ENCODE measurements at regions of chr10 and their contacts with region 1.

Region 1: GRCh38 chr10:4372601-4373000 is 453.4 kb upstream of the AKR1E2 start:
- DNase-seq: no peak
- H3K4me3 ChIP-seq: no peak overlapping the region
- H3K27ac ChIP-seq: no peak overlapping the region
- H3K4me1 ChIP-seq: no peaks in the 10 kb centered on the region
- H3K27me3 ChIP-seq: no peaks in the 10 kb centered on the region
- CTCF ChIP-seq: no peak

Region 2: DNA sequence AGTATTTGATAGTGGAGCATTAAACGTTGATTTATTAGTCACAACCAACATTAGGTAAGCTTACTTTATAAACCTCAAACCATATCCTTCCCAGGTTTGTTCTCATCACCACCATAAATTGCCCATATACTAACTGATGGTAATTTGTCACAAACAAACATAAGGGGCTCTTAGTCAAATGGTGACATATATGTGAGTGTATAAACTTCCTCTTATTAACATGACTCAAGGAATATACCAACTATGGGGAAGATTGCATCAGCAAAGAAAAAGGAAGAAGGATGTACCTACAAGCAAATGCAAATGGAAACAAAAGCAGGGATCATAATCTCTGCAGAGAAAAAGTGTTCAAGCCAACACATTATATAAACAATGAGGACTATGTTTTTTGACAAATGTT is 35.2 kb after region 1 on chr10:
- CTCF ChIA-PET with region 1: no interaction called
- dilution Hi-C with region 1: loop called (anchors 5 kb)
- in situ Hi-C with region 1: no loop called
- intact Hi-C with region 1: no loop called
- DNase-seq: peak; percentile 76
- H3K4me3 ChIP-seq: no peak overlapping the region
- H3K27ac ChIP-seq: peak overlapping the region; percentile 34
- H3K4me1 ChIP-seq: peaks cover 11% of the 10 kb centered on the region
- H3K27me3 ChIP-seq: no peaks in the 10 kb centered on the region
- CTCF ChIP-seq: no peak

Region 3: GRCh38 chr10:4678023-4678950 is 305.7 kb after region 1 on chr10:
- CTCF ChIA-PET with region 1: no interaction called
- dilution Hi-C with region 1: no loop called
- in situ Hi-C with region 1: no loop called
- intact Hi-C with region 1: no loop called
- DNase-seq: peak; percentile 94
- H3K4me3 ChIP-seq: peak overlapping the region in 2 of 3 experiments; percentile 46 to 61
- H3K27ac ChIP-seq: peak overlapping the region; percentile 100
- H3K4me1 ChIP-seq: peaks cover 43% of the 10 kb centered on the region
- H3K27me3 ChIP-seq: no peaks in the 10 kb centered on the region
- CTCF ChIP-seq: no peak